ENCODE measurements at regions of chr7 and their contacts with region 1.

Region 1: GRCh38 chr7:15291702-15292101 is 270.1 kb downstream of the AGMO start:
- DNase-seq: no peak
- H3K4me3 ChIP-seq: no peak overlapping the region
- H3K27ac ChIP-seq: no peak overlapping the region
- H3K4me1 ChIP-seq: no peaks in the 10 kb centered on the region
- H3K27me3 ChIP-seq: no peaks in the 10 kb centered on the region
- CTCF ChIP-seq: no peak

Region 2: DNA sequence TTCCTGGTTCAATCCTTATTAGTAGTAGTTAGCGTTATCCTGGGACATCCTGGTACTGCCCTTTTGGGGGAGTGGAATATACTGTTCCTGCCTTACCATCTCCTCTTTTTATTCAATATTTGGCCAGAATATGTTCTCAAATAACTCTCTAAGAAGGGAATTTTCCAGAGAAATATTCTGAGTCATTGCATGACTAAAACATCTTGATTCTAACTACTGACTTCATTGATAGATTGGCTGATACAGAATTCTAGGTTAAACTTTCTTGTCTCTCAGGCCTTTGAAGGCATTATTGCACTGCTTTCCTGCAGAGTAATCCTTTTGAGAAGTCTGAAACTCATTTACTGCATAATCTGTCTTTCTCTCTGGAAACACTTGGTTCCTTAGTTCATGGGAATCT is 113.6 kb before region 1 on chr7:
- CTCF ChIA-PET with region 1: no interaction called
- POLR2A ChIA-PET with region 1: no interaction called
- intact Hi-C with region 1: loop called (anchors 5 kb)
- DNase-seq: no peak
- H3K4me3 ChIP-seq: no peak overlapping the region
- H3K27ac ChIP-seq: no peak overlapping the region
- H3K4me1 ChIP-seq: no peaks in the 10 kb centered on the region
- H3K27me3 ChIP-seq: no peaks in the 10 kb centered on the region
- CTCF ChIP-seq: no peak